ENCODE measurements at regions of chr16 and their contacts with region 1.

Region 1: GRCh38 chr16:30429678-30430427 is at the start of gene DCTPP1:
- DNase-seq: peak; percentile 97
- H3K4me3 Mint-ChIP-seq: no peak within 1 kb of the TSS
- H3K27ac Mint-ChIP-seq: no peak within 1 kb of the TSS
- H3K4me1 Mint-ChIP-seq: peaks cover 17% of the 10 kb centered on the region
- H3K27me3 Mint-ChIP-seq: no peaks in the 10 kb centered on the region
- CTCF ChIP-seq: peak; percentile 92
- total RNA-seq, gene DCTPP1: 120 and 124 TPM in 2 replicates

Region 2: DNA sequence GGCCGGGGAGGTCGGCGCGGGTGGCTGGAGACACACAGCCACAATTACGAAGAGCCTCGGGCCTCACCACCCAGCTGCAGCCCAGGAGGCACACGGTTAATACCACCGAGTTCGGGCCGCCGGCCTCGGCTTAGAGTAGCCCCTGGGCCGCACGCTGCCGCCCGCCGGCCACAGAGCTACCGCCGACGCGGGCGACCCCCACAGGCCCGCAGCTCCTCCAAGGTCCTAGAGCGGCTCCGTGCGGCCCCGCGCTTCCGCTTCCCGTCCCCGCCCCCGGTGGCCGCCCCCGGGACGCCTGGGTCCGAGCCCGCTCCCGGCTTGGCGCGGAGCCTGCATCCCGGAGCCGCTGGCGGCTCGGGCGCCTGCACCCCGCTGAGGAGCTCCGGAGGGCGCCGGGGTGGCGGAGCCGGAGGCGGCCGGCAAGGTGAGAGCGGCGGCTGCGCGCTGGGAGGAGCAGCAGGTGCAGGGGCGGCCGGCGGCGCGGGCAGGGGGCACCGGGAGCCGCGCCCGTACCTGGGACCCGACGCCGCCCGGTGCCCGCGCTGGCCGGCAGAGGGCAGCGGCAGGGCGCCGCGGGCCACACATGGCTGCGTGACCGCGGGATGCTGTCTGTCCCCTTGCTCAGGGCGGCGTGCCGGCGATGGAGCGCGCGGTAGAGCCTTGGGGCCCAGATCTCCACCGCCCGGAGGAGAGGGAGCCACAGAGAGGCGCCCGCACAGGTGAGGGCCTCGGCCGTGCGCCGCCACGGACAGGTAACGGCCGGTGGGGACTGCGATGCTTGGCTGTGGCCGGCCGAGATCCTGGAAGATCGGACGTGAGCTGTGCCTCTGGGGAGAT is 34.5 kb before region 1 on chr16 and contains the start of gene ZNF48:
- CTCF ChIA-PET with region 1: interaction called, 10 read pairs
- intact Hi-C with region 1: no loop called
- DNase-seq: peak; percentile 93
- H3K4me3 Mint-ChIP-seq: peak within 1 kb of the TSS; percentile 79
- H3K27ac Mint-ChIP-seq: peak within 1 kb of the TSS; percentile 78
- H3K4me1 Mint-ChIP-seq: peaks cover 31% of the 10 kb centered on the region
- H3K27me3 Mint-ChIP-seq: no peaks in the 10 kb centered on the region
- CTCF ChIP-seq: peak; percentile 70
- total RNA-seq, gene ZNF48: 21.2 and 24.8 TPM in 2 replicates

Region 3: GRCh38 chr16:30445408-30446202 is 15.8 kb after region 1 on chr16 and contains the start of gene SEPHS2:
- CTCF ChIA-PET with region 1: interaction called, 6 read pairs
- intact Hi-C with region 1: loop called (anchors 2 kb)
- DNase-seq: peak; percentile 97
- H3K4me3 Mint-ChIP-seq: peak within 1 kb of the TSS; percentile 76
- H3K27ac Mint-ChIP-seq: peak within 1 kb of the TSS; percentile 98
- H3K4me1 Mint-ChIP-seq: peaks cover 53% of the 10 kb centered on the region
- H3K27me3 Mint-ChIP-seq: no peaks in the 10 kb centered on the region
- CTCF ChIP-seq: no peak
- total RNA-seq, gene SEPHS2: 85.0 and 109 TPM in 2 replicates

Region 4: DNA sequence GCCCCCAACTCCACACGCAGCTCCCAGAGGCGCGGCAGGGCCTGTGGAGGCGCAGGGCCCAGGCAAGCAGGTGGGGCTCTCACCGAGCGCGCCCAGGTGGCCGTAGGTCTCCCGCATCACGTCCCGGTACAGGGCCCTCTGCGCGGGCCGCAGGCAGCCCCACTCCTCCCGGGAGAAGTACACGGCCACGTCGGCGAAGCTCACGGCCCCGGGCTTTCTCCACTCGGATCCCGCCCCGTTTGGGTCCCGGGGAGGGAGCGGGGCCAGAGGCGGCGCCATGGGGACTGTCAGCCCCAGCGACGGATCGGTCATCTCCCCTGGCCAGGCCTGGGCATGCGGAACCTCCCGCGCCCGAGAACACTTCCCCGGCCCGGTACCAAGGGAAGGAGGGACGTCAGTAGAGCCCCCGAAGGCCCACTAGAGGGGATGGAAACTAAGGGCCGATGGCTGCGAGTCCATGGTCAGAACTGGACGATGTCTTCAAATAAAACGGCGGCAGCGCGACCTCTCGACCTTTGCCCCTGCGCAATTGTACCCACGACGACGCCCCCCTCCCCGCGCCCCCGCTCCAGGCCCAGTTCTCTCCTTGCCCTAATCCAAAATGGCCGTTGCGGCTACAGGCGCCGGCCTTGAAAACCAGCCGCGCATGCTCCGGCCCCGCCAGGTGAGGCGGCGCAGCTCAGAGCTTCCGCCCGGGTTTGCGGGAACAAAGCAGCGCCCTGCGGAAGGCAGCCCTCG is 104.7 kb after region 1 on chr16 and contains the start of gene ZNF747:
- CTCF ChIA-PET with region 1: interaction called, 21 read pairs
- intact Hi-C with region 1: loop called (anchors 2 kb)
- DNase-seq: peak; percentile 91
- H3K4me3 Mint-ChIP-seq: peak within 1 kb of the TSS; percentile 73
- H3K27ac Mint-ChIP-seq: peak within 1 kb of the TSS; percentile 65
- H3K4me1 Mint-ChIP-seq: peaks cover 24% of the 10 kb centered on the region
- H3K27me3 Mint-ChIP-seq: no peaks in the 10 kb centered on the region
- CTCF ChIP-seq: peak; percentile 16
- total RNA-seq, gene ZNF747: 12.3 and 15.4 TPM in 2 replicates

Region 5: GRCh38 chr16:30571695-30572600 is 142.1 kb after region 1 on chr16 and contains the start of gene ZNF688:
- CTCF ChIA-PET with region 1: interaction called, 12 read pairs
- intact Hi-C with region 1: no loop called
- DNase-seq: peak; percentile 95
- H3K4me3 Mint-ChIP-seq: peak within 1 kb of the TSS; percentile 84
- H3K27ac Mint-ChIP-seq: peak within 1 kb of the TSS; percentile 93
- H3K4me1 Mint-ChIP-seq: peaks cover 35% of the 10 kb centered on the region
- H3K27me3 Mint-ChIP-seq: no peaks in the 10 kb centered on the region
- CTCF ChIP-seq: no peak
- total RNA-seq, gene ZNF688: 11.8 and 13.5 TPM in 2 replicates

Region 6: DNA sequence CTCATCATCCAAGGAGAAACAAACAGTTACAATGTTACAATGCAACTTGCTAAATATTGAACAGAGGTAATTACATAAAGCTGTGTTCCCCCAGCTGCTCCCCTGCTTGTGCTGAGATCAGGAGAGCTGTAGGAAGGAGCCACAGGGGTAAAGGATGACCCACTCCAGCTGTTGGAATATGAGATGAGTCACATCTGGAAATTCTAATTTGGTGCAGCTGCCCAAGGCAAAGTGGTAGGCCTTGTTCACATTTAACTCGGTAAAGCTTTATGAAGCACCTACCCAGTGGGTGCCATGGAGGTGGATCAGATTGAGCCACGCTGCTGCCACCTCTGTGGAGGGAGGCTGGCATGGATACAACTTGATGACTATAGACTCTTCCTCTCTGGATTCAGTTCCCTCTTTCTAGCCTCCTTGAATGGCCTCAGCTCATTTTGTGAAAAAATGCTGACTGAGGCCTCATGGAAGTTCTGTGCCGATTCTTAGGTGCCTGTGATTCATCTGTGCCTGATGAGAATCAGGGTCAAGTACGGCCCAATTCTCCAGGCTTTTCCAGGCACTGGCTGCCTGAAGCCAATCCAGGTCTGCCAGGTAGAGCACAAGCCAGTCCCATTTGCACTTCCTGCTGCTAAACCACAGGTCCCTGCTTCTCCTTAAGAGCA is 172.9 kb after region 1 on chr16:
- CTCF ChIA-PET with region 1: interaction called, 29 read pairs
- intact Hi-C with region 1: no loop called
- DNase-seq: no peak
- H3K4me3 Mint-ChIP-seq: no peak overlapping the region
- H3K27ac Mint-ChIP-seq: no peak overlapping the region
- H3K4me1 Mint-ChIP-seq: no peaks in the 10 kb centered on the region
- H3K27me3 Mint-ChIP-seq: no peaks in the 10 kb centered on the region
- CTCF ChIP-seq: no peak

Region 7: GRCh38 chr16:30628627-30629540 is 199.0 kb after region 1 on chr16:
- CTCF ChIA-PET with region 1: interaction called, 11 read pairs
- intact Hi-C with region 1: loop called (anchors 1 kb)
- DNase-seq: peak; percentile 93
- H3K4me3 Mint-ChIP-seq: no peak overlapping the region
- H3K27ac Mint-ChIP-seq: no peak overlapping the region
- H3K4me1 Mint-ChIP-seq: peaks cover 14% of the 10 kb centered on the region
- H3K27me3 Mint-ChIP-seq: peaks cover 6% of the 10 kb centered on the region
- CTCF ChIP-seq: peak; percentile 93